GM10248 (cell line): ENCODE measurements at regions of chr2 and their contacts with region 1.

Region 1: DNA sequence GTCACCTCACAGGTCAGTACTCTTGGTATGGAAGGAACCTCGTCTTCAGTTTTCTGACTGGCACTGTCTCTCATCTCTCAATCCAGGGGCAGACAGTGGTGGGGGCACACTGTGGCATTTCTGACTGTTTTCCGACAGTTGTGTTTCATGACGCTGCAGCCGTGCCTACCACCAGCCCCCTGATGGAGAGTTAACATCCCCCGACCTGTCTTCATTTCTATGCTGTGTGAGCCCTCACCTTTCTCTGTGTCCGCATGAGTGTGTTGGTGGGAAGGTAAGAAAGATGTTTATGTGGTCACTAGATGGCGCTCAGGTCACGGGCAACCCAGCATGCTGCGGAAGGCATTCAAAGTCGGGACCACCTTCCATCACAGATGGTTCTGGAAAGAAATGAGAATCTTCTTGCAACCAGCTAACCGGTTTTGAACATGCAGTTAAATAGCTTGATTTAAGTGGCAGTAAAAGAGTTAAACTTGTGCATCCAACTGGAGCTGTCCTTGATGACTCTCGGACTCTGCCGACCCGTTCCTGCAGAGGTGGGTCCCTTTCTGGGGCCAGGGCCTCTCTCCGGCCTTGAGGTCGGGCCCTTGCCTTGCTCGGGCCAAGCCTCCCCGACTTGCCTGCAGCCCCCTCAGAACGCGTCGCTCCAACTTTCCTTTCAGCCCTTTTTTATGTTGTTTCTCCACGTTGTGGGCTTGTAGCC is 92.4 kb downstream of the DYSF start:
- DNase-seq: peak; percentile 72
- CTCF ChIP-seq: peak; percentile 61

Region 2: GRCh38 chr2:71530641-71531332 is 14.9 kb before region 1 on chr2:
- CTCF ChIA-PET with region 1: interaction called, 39 read pairs
- POLR2A ChIA-PET with region 1: no interaction called
- DNase-seq: peak; percentile 72
- CTCF ChIP-seq: peak; percentile 48

Region 3: DNA sequence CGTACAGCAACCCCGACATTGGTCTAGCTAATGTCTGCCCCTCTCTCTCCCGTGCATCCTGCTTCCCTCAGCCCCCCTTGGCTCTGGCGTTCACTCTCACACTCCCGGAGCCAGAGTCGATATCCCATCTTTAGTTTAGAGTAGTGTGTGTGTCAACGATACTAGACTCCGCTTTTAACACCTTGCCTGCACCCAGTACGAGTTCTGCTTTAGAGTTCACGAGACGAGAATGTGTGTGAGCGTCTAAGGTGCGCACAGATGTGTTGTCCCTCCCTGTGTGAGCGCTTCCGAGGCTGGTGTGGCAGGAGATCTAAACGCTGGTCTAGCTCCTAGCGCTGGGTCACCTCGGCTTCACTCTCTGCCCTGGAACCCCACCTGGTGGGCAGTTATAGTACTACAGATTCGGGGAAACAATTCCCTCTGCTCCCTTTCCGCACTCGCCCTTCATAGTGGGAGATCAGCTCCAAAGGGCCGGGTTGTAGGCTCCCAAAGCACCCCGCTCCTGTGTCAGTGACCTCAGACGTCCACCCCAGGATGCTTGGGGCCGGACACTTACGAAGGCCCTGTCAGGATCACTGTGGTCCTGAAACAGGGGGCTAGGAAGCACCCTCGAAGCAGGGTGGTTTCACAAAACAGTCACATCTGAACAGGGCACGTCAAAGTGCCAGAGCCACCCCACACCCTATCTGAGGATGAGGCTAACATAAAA is 604.6 kb after region 1 on chr2:
- CTCF ChIA-PET with region 1: interaction called, 36 read pairs
- POLR2A ChIA-PET with region 1: no interaction called
- DNase-seq: peak; percentile 77
- CTCF ChIP-seq: peak; percentile 68